WTC11 (cell line): ENCODE measurements at regions of chr9 and their contacts with region 1.

Region 1: GRCh38 chr9:94014065-94014654 is 59.0 kb upstream of the BARX1 start:
- DNase-seq: no peak
- ATAC-seq: no peak
- H3K4me3 Mint-ChIP-seq: no peak overlapping the region
- H3K27ac Mint-ChIP-seq: no peak overlapping the region
- H3K4me1 Mint-ChIP-seq: no peaks in the 10 kb centered on the region
- H3K27me3 Mint-ChIP-seq: no peaks in the 10 kb centered on the region; the same call in 1 of the 2 replicates
- CTCF ChIP-seq: peak; percentile 48

Region 2: GRCh38 chr9:93302551-93303257 is 711.5 kb before region 1 on chr9:
- CTCF ChIA-PET with region 1: no interaction called
- POLR2A ChIA-PET with region 1: no interaction called
- DNase-seq: peak; percentile 72
- ATAC-seq: peak; percentile 40
- H3K4me3 Mint-ChIP-seq: no peak overlapping the region
- H3K27ac Mint-ChIP-seq: no peak overlapping the region
- H3K4me1 Mint-ChIP-seq: peaks cover 12% of the 10 kb centered on the region
- H3K27me3 Mint-ChIP-seq: no peaks in the 10 kb centered on the region
- CTCF ChIP-seq: peak; percentile 47

Region 3: DNA sequence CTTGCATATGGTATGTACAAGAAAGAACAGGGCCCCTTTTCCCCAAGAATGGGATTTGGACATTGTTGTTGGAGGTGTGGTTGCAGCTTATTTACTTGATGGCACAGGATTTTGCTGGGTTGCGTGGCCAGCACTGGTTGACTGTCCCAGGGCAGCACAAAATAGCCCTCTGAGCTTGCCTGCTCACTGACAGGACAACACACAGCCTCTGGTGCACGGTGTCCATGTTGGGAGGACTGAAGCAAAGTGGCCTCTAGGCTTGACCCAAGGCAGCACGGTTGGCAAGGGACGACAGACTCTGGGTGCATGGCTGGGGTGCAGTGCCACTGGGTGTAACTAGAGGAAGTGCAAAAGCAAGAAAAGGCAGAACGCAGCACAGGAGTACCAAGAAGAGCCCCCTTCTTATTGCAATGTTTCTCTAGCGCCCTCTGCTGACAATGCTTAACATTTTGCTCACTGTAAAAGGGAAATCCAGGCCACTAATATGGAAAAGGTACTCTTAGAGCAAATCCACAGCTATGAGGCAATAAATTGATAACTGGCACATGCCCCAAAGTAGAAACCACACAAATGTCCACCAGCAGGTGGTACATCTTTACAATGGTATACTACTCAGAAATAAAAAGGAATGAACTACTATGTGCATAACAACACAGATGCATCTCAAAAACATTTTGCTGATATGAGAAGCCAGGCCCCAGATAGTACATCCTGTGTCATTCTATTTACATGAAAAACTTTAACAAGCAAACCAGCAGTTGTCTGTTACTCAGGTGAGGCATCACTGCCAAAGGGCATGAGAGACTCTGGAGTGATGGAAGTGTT is 11.6 kb before region 1 on chr9:
- CTCF ChIA-PET with region 1: interaction called, 56 read pairs
- POLR2A ChIA-PET with region 1: no interaction called
- DNase-seq: peak; percentile 56
- ATAC-seq: peak; percentile 93
- H3K4me3 Mint-ChIP-seq: no peak overlapping the region
- H3K27ac Mint-ChIP-seq: no peak overlapping the region
- H3K4me1 Mint-ChIP-seq: 0 out of 2 replicates have a peak, but pooled peaks cover 2% of the 10 kb centered on the region
- H3K27me3 Mint-ChIP-seq: no peaks in the 10 kb centered on the region; the same call in 1 of the 2 replicates
- CTCF ChIP-seq: peak; percentile 66; the same call in 1 of the 2 replicates

Region 4: DNA sequence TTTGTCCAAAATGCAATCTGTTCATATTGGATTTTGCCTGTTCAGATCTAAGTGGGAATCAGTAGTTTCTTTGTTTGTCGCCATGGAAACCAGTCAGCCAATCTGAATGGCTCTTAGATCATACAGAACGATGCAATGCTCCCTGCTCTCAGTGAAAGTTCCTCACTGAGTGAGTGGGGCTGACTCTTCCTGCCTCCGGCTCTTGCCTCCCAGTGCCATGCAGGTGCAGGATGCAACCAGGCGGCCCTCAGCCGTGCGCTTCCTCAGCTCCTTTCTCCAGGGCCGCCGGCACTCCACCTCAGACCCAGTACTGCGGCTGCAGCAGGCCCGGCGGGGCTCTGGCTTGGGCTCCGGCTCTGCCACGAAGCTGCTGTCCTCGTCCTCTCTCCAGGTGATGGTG is 70.2 kb after region 1 on chr9 and contains the start of gene PTPDC1:
- CTCF ChIA-PET with region 1: interaction called, 10 read pairs
- POLR2A ChIA-PET with region 1: no interaction called
- DNase-seq: peak; percentile 78
- ATAC-seq: peak; percentile 90
- H3K4me3 Mint-ChIP-seq: peak within 1 kb of the TSS; percentile 47
- H3K27ac Mint-ChIP-seq: peak within 1 kb of the TSS; percentile 28
- H3K4me1 Mint-ChIP-seq: peaks cover 32% of the 10 kb centered on the region
- H3K27me3 Mint-ChIP-seq: no peaks in the 10 kb centered on the region
- CTCF ChIP-seq: no peak
- total RNA-seq, gene PTPDC1: 8.9 to 9.5 TPM (median 9.2 TPM) in 3 replicates

Region 5: DNA sequence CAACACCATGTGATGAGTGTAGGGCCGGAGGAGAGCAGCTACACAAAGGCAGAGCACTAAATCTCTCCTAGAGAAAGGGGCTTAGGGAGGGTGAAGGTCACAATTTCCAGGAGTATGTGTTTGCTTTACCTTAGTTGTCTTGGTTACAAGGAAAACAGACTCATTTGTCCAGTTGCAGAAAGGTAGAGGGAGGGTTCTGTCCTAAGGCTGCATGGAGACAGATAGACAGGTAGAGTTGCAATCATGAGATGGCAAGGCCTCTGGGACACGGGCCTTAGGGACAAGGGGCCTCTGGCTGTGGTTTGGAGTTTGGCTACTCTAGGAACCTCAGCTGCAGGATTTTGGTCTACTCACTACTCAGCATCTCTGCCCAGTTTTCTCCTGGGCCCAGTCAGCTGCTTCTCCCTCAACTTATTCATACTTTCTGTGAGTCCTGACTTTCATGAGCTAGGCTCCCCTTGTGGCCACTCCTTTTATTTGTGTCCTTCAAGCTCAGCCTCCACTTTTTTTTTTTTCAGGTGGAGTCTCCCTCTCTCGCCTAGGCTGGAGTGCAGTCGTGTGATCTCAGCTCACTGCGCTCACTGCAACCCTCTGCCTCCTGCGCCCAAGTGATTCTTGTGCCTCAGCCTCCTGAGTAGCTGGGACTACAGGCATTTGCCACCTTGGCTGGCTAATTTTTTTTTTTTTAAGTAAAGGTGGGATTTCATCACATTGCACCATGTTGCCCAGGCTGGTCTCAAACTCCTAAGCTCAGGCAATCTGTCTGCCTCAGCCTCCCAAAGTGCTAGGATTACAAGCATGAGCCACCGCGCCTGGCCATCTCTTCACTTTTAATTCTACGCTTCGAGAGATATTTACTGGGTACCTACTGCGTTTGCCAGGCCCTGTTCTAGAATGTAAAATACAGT is 146.7 kb after region 1 on chr9:
- CTCF ChIA-PET with region 1: interaction called, 15 read pairs
- POLR2A ChIA-PET with region 1: no interaction called
- DNase-seq: no peak
- ATAC-seq: no peak
- H3K4me3 Mint-ChIP-seq: no peak overlapping the region
- H3K27ac Mint-ChIP-seq: no peak overlapping the region
- H3K4me1 Mint-ChIP-seq: 0 out of 2 replicates have a peak, but pooled peaks cover 10% of the 10 kb centered on the region
- H3K27me3 Mint-ChIP-seq: peaks cover 4% of the 10 kb centered on the region; the same call in 1 of the 2 replicates
- CTCF ChIP-seq: no peak